CD8-positive, alpha-beta T cell (primary cell): ENCODE measurements at regions of chr19 and their contacts with region 1.

Region 1: GRCh38 chr19:1383311-1384084 is at the start of gene NDUFS7:
- DNase-seq: peak; percentile 91 to 100 (median 95)
- ATAC-seq: peak; percentile 90
- H3K4me3 ChIP-seq: peak within 1 kb of the TSS; percentile 93 to 94
- H3K4me3 Mint-ChIP-seq: peak within 1 kb of the TSS; percentile 94
- H3K27ac ChIP-seq: peak within 1 kb of the TSS; percentile 72 to 91
- H3K27ac Mint-ChIP-seq: peak within 1 kb of the TSS; percentile 99
- H3K4me1 ChIP-seq: peaks cover 10% of the 10 kb centered on the region
- H3K4me1 Mint-ChIP-seq: peaks cover 16% of the 10 kb centered on the region
- H3K27me3 ChIP-seq: no peaks in the 10 kb centered on the region
- H3K27me3 Mint-ChIP-seq: peaks cover 2% of the 10 kb centered on the region
- CTCF ChIP-seq: no peak
- total RNA-seq, gene NDUFS7: 38.6 to 41.1 TPM

Region 2: DNA sequence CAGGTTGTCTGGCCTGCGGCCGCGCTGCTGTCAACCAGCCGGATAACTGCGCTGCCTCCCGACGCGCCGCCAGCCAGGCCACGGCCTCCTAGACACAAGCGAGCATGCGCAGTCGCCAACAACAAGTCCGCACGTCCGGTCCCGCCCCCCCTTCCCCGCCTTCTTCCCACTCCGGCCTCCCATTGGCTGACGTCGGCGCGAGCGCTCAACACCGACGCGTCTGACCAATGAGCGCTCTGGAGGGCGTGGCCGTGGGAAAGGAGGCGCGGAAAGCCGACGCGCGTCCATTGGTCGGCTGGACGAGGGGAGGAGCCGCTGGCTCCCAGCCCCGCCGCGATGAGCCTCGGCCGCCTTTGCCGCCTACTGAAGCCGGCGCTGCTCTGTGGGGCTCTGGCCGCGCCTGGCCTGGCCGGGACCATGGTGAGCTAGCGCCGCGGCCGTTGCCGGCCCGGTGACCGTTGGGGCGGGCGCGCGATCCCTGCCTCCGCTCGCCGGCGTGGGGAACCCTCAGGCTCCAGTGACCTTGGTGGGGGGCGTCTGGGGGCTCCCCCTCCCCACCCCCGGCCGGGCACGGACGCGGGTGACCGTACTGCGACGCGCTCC is 279.7 kb before region 1 on chr19 and contains the start of gene GPX4:
- CTCF ChIA-PET with region 1: no interaction called
- POLR2A ChIA-PET with region 1: no interaction called
- intact Hi-C with region 1: loop called in 1 of 2 experiments (anchors 5 kb)
- DNase-seq: peak; percentile 96 to 100 (median 98)
- ATAC-seq: peak; percentile 88
- H3K4me3 ChIP-seq: peak within 1 kb of the TSS; percentile 73 to 93
- H3K4me3 Mint-ChIP-seq: peak within 1 kb of the TSS; percentile 76
- H3K27ac ChIP-seq: peak within 1 kb of the TSS; percentile 86
- H3K27ac Mint-ChIP-seq: peak within 1 kb of the TSS; percentile 92
- H3K4me1 ChIP-seq: peaks cover 46% of the 10 kb centered on the region
- H3K4me1 Mint-ChIP-seq: peaks cover 27% of the 10 kb centered on the region
- H3K27me3 ChIP-seq: no peaks in the 10 kb centered on the region
- H3K27me3 Mint-ChIP-seq: no peaks in the 10 kb centered on the region
- CTCF ChIP-seq: no peak
- total RNA-seq, gene GPX4: 172 to 174 TPM

Region 3: DNA sequence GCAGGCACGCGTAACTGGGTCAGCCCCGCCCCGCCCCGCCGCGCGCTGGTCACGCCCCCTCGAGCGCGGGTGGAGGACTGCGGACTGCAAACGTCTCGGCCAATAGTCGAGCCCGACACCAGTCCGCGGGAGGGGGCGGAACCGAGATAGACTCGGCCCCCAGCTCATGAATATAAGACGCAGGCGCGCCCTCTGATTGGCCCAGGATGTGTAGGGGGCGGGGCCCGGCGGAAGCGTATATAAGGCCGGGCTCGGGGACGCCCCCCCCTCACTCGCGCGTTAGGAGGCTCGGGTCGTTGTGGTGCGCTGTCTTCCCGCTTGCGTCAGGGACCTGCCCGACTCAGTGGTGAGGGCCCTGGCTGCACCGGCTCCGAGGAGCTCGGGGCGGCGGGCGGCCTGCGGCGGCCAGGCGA is 114.4 kb before region 1 on chr19 and contains the start of gene CIRBP:
- CTCF ChIA-PET with region 1: no interaction called
- POLR2A ChIA-PET with region 1: interaction called, 12 read pairs
- intact Hi-C with region 1: no loop called
- DNase-seq: peak; percentile 99 to 100 (median 99)
- ATAC-seq: peak; percentile 80
- H3K4me3 ChIP-seq: peak within 1 kb of the TSS; percentile 65 to 84
- H3K4me3 Mint-ChIP-seq: peak within 1 kb of the TSS; percentile 85
- H3K27ac ChIP-seq: peak within 1 kb of the TSS; percentile 88 to 89
- H3K27ac Mint-ChIP-seq: peak within 1 kb of the TSS; percentile 95
- H3K4me1 ChIP-seq: peaks cover 73% of the 10 kb centered on the region
- H3K4me1 Mint-ChIP-seq: peaks cover 68% of the 10 kb centered on the region
- H3K27me3 ChIP-seq: no peaks in the 10 kb centered on the region
- H3K27me3 Mint-ChIP-seq: no peaks in the 10 kb centered on the region
- CTCF ChIP-seq: no peak
- total RNA-seq, gene CIRBP: 689 to 695 TPM

Region 4: GRCh38 chr19:1401138-1401888 is 17.8 kb after region 1 on chr19 and contains the start of gene GAMT:
- CTCF ChIA-PET with region 1: interaction called, 3 read pairs
- POLR2A ChIA-PET with region 1: interaction called, 3 read pairs
- intact Hi-C with region 1: loop called in 1 of 2 experiments (anchors 1 kb)
- DNase-seq: peak; percentile 23 to 80 (median 58)
- ATAC-seq: peak; percentile 85
- H3K4me3 ChIP-seq: peak within 1 kb of the TSS; percentile 38 to 57
- H3K4me3 Mint-ChIP-seq: peak within 1 kb of the TSS; percentile 76
- H3K27ac ChIP-seq: no peak within 1 kb of the TSS
- H3K27ac Mint-ChIP-seq: no peak within 1 kb of the TSS
- H3K4me1 ChIP-seq: peaks cover 22% of the 10 kb centered on the region
- H3K4me1 Mint-ChIP-seq: peaks cover 9% of the 10 kb centered on the region
- H3K27me3 ChIP-seq: no peaks in the 10 kb centered on the region
- H3K27me3 Mint-ChIP-seq: no peaks in the 10 kb centered on the region
- CTCF ChIP-seq: peak; percentile 62
- total RNA-seq, gene GAMT: 9.5 to 11.4 TPM

Region 5: DNA sequence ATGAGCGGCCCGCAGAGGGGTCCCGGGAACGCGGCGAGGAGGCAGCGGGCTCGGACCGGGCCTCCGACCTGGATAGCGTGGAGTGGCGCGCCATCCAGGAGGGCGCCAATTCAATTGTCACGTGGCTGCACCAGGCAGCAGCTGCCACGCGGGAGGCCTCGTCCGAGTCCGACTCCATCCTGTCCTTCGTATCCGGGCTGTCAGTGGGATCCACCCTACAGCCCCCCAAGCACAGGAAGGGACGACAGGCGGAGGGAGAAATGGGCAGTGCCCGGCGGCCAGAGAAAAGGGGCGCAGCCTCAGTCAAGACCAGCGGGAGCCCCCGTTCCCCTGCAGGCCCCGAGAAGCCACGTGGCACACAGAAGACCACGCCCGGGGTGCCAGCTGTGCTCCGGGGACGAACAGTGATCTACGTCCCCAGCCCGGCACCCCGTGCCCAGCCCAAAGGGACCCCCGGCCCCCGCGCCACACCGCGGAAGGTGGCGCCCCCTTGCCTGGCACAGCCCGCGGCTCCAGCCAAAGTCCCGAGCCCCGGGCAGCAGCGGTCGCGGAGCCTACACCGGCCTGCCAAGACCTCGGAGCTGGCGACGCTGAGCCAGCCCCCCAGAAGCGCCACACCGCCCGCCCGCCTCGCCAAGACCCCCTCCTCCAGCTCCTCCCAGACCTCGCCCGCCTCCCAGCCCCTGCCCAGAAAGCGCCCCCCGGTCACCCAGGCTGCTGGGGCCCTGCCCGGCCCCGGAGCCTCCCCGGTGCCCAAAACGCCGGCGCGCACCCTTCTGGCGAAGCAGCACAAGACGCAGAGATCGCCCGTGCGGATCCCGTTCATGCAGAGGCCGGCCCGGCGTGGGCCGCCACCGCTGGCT is 85.0 kb after region 1 on chr19:
- CTCF ChIA-PET with region 1: no interaction called
- POLR2A ChIA-PET with region 1: no interaction called
- intact Hi-C with region 1: no loop called
- DNase-seq: peak in 1 of 9 experiments; percentile 38
- ATAC-seq: no peak
- H3K4me3 ChIP-seq: peak overlapping the region in 1 of 2 experiments; percentile 23
- H3K4me3 Mint-ChIP-seq: peak overlapping the region; percentile 60
- H3K27ac ChIP-seq: no peak overlapping the region
- H3K27ac Mint-ChIP-seq: no peak overlapping the region
- H3K4me1 ChIP-seq: peaks cover 54% of the 10 kb centered on the region
- H3K4me1 Mint-ChIP-seq: peaks cover 14% of the 10 kb centered on the region
- H3K27me3 ChIP-seq: peaks cover 20 to 21% of the 10 kb centered on the region in 2 experiments
- H3K27me3 Mint-ChIP-seq: peaks cover 2% of the 10 kb centered on the region
- CTCF ChIP-seq: no peak

Region 6: DNA sequence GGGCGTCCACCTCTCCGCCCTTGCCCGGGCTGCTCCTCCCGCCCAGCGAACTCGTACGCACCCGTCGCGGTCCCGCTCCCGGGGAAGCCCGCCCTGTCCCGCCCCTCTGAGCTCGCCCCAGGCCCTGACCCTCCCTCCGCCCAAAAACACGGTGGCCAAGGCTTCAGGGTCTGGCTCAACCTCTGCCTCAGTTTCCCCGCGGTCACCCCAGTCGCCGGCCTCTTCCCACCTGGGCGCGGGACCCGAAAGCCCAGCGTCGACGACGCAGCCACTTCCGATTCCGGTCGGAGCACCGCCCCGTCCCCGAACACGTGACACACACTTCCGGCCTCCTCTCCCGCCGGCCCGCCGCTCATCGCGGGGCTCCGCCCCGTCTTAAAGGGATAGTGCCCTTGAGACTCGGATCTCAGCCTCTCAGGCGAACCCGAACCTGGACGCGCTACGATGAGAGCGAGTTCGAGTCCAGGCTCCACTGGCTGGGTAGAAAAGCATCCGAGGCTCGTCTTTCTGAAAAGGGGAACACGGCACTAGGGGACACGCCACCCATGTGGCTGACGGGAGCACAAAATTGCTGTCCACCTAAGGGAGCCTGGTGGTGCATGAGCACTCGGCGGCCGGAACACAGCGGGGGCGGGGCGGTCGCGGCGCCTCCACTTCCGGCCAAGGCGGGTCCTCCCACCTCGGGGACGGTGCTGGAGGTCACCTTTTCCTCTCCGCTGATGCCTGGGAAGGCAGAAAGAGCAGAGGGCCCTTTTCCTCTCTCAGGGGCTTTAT is 95.6 kb after region 1 on chr19 and contains the start of gene C19orf25:
- CTCF ChIA-PET with region 1: no interaction called
- POLR2A ChIA-PET with region 1: no interaction called
- intact Hi-C with region 1: loop called in 1 of 2 experiments (anchors 2 kb)
- DNase-seq: peak; percentile 81 to 94 (median 89)
- ATAC-seq: peak; percentile 91
- H3K4me3 ChIP-seq: peak within 1 kb of the TSS; percentile 68 to 86
- H3K4me3 Mint-ChIP-seq: peak within 1 kb of the TSS; percentile 99
- H3K27ac ChIP-seq: peak within 1 kb of the TSS; percentile 65 to 76
- H3K27ac Mint-ChIP-seq: peak within 1 kb of the TSS; percentile 98
- H3K4me1 ChIP-seq: peaks cover 12% of the 10 kb centered on the region
- H3K4me1 Mint-ChIP-seq: peaks cover 19% of the 10 kb centered on the region
- H3K27me3 ChIP-seq: no peaks in the 10 kb centered on the region
- H3K27me3 Mint-ChIP-seq: no peaks in the 10 kb centered on the region
- CTCF ChIP-seq: no peak
- total RNA-seq, gene C19orf25: 11.9 to 12.1 TPM

Region 7: DNA sequence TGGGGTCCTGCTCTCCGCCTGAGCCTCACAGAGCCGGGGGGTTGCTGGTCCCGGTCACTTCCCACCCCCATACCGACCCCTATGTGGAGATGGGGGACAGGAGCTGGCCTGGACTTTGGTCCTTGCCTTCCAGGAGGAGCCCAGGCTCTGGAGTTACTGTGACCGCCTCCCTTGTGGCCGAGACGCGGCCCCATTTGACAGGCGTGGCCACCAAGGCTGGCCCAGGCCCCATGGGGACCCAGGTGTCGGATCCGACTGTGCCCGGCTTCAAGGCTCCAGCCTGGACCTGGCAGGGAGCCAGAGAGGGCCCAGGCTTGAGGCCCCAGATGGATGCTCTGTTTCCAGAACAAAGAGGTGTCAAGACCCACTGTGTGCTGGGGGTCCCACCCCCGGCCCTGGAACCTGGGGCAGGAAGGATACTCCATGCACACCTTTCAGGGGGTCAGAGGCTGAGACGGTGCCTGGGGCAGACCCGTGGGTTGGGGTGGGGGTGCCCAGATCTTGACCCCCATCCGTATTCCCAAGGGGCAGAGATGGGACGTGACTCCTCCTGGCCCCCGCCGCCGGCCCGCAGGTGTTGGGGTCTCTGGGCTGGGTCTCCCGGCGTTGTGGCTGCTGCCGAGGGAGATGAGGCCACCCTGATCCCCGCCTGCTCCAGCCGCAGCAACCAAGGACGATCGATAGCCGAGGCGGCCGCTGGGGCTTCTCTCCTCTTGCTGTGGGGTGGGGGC is 316.7 kb after region 1 on chr19:
- CTCF ChIA-PET with region 1: no interaction called
- POLR2A ChIA-PET with region 1: no interaction called
- intact Hi-C with region 1: no loop called
- DNase-seq: no peak
- ATAC-seq: no peak
- H3K4me3 ChIP-seq: no peak overlapping the region
- H3K4me3 Mint-ChIP-seq: no peak overlapping the region
- H3K27ac ChIP-seq: no peak overlapping the region
- H3K27ac Mint-ChIP-seq: no peak overlapping the region
- H3K4me1 ChIP-seq: peaks cover 12% of the 10 kb centered on the region
- H3K4me1 Mint-ChIP-seq: peaks cover 12% of the 10 kb centered on the region
- H3K27me3 ChIP-seq: peaks cover 9 to 20% of the 10 kb centered on the region in 2 experiments
- H3K27me3 Mint-ChIP-seq: peaks cover 24% of the 10 kb centered on the region
- CTCF ChIP-seq: no peak

Region 8: GRCh38 chr19:1713170-1713569 is 329.7 kb after region 1 on chr19:
- CTCF ChIA-PET with region 1: no interaction called
- POLR2A ChIA-PET with region 1: no interaction called
- intact Hi-C with region 1: no loop called
- DNase-seq: no peak
- ATAC-seq: no peak
- H3K4me3 ChIP-seq: no peak overlapping the region
- H3K4me3 Mint-ChIP-seq: no peak overlapping the region
- H3K27ac ChIP-seq: no peak overlapping the region
- H3K27ac Mint-ChIP-seq: no peak overlapping the region
- H3K4me1 ChIP-seq: no peaks in the 10 kb centered on the region
- H3K4me1 Mint-ChIP-seq: no peaks in the 10 kb centered on the region
- H3K27me3 ChIP-seq: peaks cover 0 to 9% of the 10 kb centered on the region in 2 experiments
- H3K27me3 Mint-ChIP-seq: peaks cover 40% of the 10 kb centered on the region
- CTCF ChIP-seq: no peak